Dendritic cell treated with granulocyte-macrophage colony-stimulating factor and Interleukin-4, amounts not matched to agents 40 ng/mL and 50 ng/mL, for 4 days (primary cell): ENCODE measurements at regions of chr2 and their contacts with region 1.

Region 1: DNA sequence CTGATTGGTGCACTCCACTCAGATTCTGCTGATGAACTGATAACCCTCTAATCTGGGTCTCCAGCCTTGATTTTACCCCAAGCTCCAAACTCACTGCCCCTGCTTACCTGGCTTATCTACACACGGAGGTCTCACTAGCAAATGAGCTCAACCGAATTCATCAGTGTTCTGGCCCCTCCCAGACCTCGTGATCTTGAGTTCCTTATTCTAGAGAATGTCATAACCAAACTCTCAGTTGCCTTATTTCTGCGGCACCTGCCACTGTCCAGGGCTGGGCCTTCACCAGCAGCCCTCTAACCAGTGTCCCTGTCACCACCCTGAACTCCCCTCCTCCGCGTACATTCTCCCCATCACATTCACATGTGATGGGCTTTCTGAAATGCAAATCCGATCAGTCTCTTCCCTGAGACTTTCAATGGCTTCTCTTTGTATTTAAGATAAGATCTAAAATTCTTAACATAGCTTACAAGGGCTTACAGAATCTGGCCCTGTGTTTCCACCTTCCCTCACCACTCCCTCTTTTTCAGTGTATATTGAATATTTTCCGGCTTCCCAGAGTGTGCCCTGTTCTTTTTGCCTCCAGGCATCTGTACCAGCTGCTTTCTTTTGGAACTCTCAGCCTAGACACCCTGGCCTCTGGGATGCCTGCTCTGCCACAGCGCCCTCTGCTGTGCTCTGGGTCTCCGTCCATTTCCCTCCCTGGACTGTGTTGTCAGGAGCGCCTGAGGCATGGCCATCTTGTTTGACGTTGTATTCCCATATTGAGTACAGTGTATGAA is 31.1 kb downstream of the NAB1 start:
- H3K4me3 Mint-ChIP-seq: no peak overlapping the region
- H3K27ac Mint-ChIP-seq: peak overlapping the region; percentile 76
- H3K4me1 Mint-ChIP-seq: peaks cover 23% of the 10 kb centered on the region
- H3K27me3 Mint-ChIP-seq: no peaks in the 10 kb centered on the region

Region 2: DNA sequence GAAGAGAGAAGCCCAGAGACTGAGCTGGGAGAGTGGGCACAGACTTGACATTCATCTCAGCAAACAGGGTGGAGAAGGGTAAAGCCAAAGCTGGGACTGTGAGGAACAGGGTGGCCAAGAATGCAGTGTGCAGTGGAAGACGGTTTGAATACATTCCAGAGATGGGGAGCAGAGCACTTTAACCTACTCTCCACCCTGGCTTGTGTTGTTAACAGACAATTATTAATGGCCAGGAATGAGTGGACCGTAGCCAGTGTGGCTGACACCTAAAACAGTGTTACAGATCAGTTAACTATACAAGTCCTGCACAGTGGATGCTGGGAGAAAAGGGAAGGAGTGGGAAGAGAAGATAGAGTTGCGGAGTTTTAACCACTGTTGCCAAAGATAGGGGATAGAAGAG is 38.5 kb before region 1 on chr2:
- intact Hi-C with region 1: loop called (anchors 5 kb)
- H3K4me3 Mint-ChIP-seq: no peak overlapping the region
- H3K27ac Mint-ChIP-seq: peak overlapping the region; percentile 19
- H3K4me1 Mint-ChIP-seq: peaks cover 39% of the 10 kb centered on the region
- H3K27me3 Mint-ChIP-seq: no peaks in the 10 kb centered on the region